IMR-90 (cell line): ENCODE measurements at regions of chr15 and their contacts with region 1.

Region 1: GRCh38 chr15:70763120-70763878 is at the start of gene UACA:
- DNase-seq: peak; percentile 96
- ATAC-seq: peak; percentile 90
- H3K4me3 ChIP-seq: peak within 1 kb of the TSS; percentile 86
- H3K27ac ChIP-seq: peak within 1 kb of the TSS; percentile 90
- H3K4me1 ChIP-seq: peaks cover 7% of the 10 kb centered on the region
- H3K27me3 ChIP-seq: no peaks in the 10 kb centered on the region
- CTCF ChIP-seq: no peak
- POLR2A ChIP-seq: peak; percentile 77
- RAD21 ChIP-seq: no peak
- total RNA-seq, gene UACA: 505 and 507 TPM in 2 replicates

Region 2: DNA sequence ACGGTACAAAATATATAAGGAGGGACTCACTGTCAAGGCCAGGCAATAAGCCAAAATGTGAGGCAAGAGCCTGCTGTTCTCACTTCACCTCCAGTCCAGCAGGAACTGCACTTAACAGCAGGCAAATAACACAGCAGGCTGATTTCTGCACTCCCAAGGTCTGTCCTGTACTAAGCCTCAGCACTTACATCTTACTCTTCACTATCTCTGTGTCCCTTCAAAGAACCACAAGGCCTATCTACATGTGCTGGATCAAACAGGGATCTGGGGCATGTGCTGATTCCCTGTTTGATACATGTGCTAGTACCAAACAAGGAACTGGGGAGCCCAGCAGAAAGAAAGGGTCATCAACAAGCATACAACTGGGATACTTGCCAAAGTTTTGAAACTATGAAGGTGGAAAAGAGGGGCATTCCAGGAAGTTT is 22.2 kb before region 1 on chr15:
- CTCF ChIA-PET with region 1: interaction called, 3 read pairs
- POLR2A ChIA-PET with region 1: no interaction called
- dilution Hi-C with region 1: no loop called
- in situ Hi-C with region 1: no loop called
- intact Hi-C with region 1: loop called (anchors 2 kb)
- DNase-seq: peak; percentile 90
- ATAC-seq: peak; percentile 73
- H3K4me3 ChIP-seq: no peak overlapping the region
- H3K27ac ChIP-seq: peak overlapping the region; percentile 62; the same call in 1 of the 2 replicates
- H3K4me1 ChIP-seq: peaks cover 7% of the 10 kb centered on the region
- H3K27me3 ChIP-seq: no peaks in the 10 kb centered on the region
- CTCF ChIP-seq: no peak
- POLR2A ChIP-seq: no peak
- RAD21 ChIP-seq: no peak

Region 3: DNA sequence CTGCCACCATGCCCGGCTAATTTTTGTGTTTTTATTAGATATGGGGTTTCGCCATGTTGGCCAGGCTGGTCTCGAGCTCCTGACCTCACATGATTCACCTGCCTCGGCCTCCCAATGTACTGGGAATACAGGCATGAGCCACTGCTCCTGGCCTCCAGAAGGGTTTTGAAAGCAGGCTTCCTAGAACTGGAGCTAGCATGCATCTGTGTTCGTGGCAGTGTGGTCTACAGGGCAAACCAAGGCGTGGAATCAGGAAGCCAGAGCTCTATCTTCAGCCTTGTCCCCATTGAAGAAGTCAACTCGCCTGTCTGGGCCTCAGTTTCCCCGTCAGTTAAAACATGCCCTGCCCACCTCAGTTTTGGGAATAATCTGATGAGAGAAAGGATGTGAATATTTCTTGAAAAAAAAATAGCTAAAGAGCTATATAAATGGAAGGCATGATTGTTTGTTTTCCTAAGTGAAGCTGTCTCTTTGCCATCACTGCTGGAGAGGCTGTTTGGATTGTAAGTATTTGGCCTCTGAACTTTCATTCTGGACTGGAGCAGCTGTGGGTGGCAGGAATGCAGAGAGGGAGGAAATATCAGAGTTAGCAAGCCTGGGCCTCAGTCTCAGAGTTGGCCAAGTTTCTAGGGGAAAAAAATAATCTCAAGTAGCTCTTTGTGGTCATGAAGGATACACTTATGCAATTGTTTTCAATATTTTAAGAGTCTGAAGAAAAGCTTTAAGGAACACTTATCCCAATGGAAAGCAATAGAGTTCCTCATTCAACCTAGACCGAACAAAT is 36.6 kb after region 1 on chr15:
- CTCF ChIA-PET with region 1: no interaction called
- POLR2A ChIA-PET with region 1: interaction called, 8 read pairs
- dilution Hi-C with region 1: no loop called
- in situ Hi-C with region 1: no loop called
- intact Hi-C with region 1: loop called (anchors 1 kb)
- DNase-seq: peak; percentile 99
- ATAC-seq: peak; percentile 80
- H3K4me3 ChIP-seq: no peak overlapping the region
- H3K27ac ChIP-seq: peak overlapping the region; percentile 97
- H3K4me1 ChIP-seq: peaks cover 33% of the 10 kb centered on the region
- H3K27me3 ChIP-seq: no peaks in the 10 kb centered on the region
- CTCF ChIP-seq: no peak
- POLR2A ChIP-seq: no peak
- RAD21 ChIP-seq: no peak

Region 4: DNA sequence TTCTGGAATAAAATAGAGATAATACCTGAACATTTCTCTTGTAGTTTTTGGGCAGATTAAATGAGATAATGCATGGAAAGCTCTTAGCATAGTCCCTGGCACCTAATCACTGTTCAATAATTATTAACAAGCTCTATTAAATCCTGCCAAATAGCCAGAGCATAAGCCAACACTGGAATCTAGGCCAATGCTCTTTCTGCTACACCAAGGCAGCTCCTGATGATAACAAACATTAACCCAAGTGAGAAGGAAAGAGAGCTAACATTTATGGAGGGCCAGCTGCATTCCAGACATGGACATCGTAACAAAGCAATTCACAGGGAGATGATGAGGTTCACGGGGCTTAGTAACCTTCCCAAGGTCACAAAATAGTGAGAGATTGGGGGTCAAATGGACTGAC is 67.3 kb after region 1 on chr15:
- CTCF ChIA-PET with region 1: no interaction called
- POLR2A ChIA-PET with region 1: no interaction called
- dilution Hi-C with region 1: no loop called
- in situ Hi-C with region 1: no loop called
- intact Hi-C with region 1: no loop called
- DNase-seq: no peak
- ATAC-seq: no peak
- H3K4me3 ChIP-seq: no peak overlapping the region
- H3K27ac ChIP-seq: no peak overlapping the region
- H3K4me1 ChIP-seq: peaks cover 13% of the 10 kb centered on the region
- H3K27me3 ChIP-seq: no peaks in the 10 kb centered on the region
- CTCF ChIP-seq: no peak
- POLR2A ChIP-seq: no peak
- RAD21 ChIP-seq: no peak